Stomach (tissue), 19 donors: ENCODE measurements at regions of chr1 and their contacts with region 1.

Region 1: GRCh38 chr1:37602750-37603694 is 7.3 kb upstream of the GNL2 start:
- DNase-seq: peak in 1 of 2 donors; percentile 56
- H3K4me3 ChIP-seq: no peak overlapping the region
- H3K27ac ChIP-seq: no peak overlapping the region
- H3K4me1 ChIP-seq: peaks cover 0 to 20% (median 2%) of the 10 kb centered on the region in 4 donors
- H3K27me3 ChIP-seq: peaks cover 0 to 52% (median 13%) of the 10 kb centered on the region in 3 donors
- CTCF ChIP-seq: peak in 5 of 7 experiments; percentile 23 to 59 (median 44)
- EP300 ChIP-seq: no peak
- POLR2A ChIP-seq: no peak

Region 2: DNA sequence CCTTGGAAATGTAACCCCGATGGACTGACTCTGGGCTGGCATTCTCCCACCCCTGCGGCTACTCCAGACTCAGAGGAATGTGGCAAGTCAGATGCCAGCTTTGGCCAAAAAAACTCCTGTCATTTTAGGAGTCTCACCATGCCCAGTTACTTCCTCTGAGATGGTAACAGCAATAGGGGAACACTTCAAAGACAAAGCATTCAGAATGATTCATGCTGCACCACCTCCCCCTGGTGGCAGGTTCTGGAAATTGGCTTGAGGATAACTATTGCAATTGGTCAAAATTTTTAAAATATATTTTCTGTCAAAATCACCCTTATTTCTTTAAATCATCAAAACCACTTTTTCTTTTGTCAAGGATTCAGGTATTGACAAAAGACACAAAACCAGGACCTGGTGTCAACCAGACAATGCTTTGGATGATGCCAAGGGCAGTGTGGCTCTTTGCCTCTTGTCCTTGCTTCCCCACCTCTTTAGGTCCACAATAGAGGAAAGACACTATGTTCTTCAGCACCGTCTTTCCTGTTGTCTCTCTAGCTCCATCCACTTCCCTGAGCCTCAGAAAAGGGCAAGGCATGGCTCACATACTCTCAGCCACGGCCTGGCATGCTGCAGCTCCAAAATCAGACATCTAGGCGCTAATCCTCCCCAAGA is 79.4 kb after region 1 on chr1:
- intact Hi-C with region 1: loop called (anchors 5 kb)
- DNase-seq: peak; percentile 70 to 85
- H3K4me3 ChIP-seq: no peak overlapping the region
- H3K27ac ChIP-seq: no peak overlapping the region
- H3K4me1 ChIP-seq: peaks cover 0 to 2% (median 0%) of the 10 kb centered on the region in 4 donors
- H3K27me3 ChIP-seq: no peaks in the 10 kb centered on the region
- CTCF ChIP-seq: peak in 5 of 7 experiments; percentile 56 to 88 (median 72)
- EP300 ChIP-seq: no peak
- POLR2A ChIP-seq: no peak